ENCODE measurements at regions of chr7 and their contacts with region 1.

Region 1: GRCh38 chr7:16234493-16235146 is 186.7 kb downstream of the CRPPA start:
- DNase-seq: no peak
- H3K4me3 ChIP-seq: no peak overlapping the region
- CTCF ChIP-seq: no peak
- POLR2A ChIP-seq: no peak

Region 2: GRCh38 chr7:16260236-16260728 is 25.7 kb after region 1 on chr7:
- intact Hi-C with region 1: loop called (anchors 1 kb)
- DNase-seq: no peak
- H3K4me3 ChIP-seq: no peak overlapping the region
- CTCF ChIP-seq: no peak
- POLR2A ChIP-seq: no peak

Region 3: GRCh38 chr7:16309129-16309528 is 74.5 kb after region 1 on chr7:
- intact Hi-C with region 1: no loop called
- DNase-seq: no peak
- H3K4me3 ChIP-seq: no peak overlapping the region
- CTCF ChIP-seq: no peak
- POLR2A ChIP-seq: no peak

Measured in lower leg skin (tissue), 4 donors.